ENCODE measurements at regions of chr2 and their contacts with region 1.

Region 1: GRCh38 chr2:161265874-161266273 is 42.4 kb upstream of the PSMD14 start:
- DNase-seq: no peak
- ATAC-seq: no peak
- H3K4me3 ChIP-seq: no peak overlapping the region
- H3K27ac ChIP-seq: no peak overlapping the region
- H3K4me1 ChIP-seq: no peaks in the 10 kb centered on the region
- H3K27me3 ChIP-seq: no peaks in the 10 kb centered on the region
- CTCF ChIP-seq: no peak

Region 2: DNA sequence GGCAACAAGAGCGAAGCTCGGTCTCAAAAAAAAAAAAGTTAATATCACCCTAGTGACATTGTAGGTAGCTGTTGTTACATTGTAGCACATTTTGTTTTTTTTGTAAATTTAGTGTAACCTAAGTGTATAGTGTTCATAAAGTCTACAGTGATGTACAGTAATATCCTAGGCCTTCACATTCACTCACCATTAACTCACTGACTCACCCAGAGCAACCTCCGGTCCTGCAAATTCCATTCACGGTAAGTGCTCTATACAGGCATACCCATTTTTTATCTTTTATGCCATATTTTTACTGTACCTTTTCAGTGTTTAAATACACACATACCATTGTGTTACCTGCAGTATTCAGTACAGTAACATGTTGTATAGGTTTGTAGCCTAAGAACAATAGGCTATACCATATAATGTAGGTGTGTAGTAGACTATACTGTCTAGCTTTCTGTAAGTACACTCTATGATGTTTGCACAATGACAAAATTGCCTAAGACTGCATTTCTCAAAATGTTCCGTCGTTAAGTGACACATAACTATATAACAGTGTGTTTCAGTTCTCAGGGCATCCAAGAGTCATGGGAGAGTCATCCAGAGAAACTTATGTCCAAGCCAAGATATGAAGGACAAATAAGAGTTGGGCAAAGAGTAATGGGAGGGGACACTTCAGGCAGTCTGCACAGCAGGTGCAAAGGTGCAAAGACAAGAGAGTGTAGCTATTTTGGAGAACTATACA is 37.2 kb before region 1 on chr2:
- intact Hi-C with region 1: loop called in 6 of 10 experiments (anchors 5 to 10 kb)
- DNase-seq: no peak
- ATAC-seq: no peak
- H3K4me3 ChIP-seq: no peak overlapping the region
- H3K27ac ChIP-seq: no peak overlapping the region
- H3K4me1 ChIP-seq: no peaks in the 10 kb centered on the region
- H3K27me3 ChIP-seq: no peaks in the 10 kb centered on the region
- CTCF ChIP-seq: no peak